ENCODE measurements at regions of chr1 and their contacts with region 1.

Region 1: GRCh38 chr1:179706339-179706941 is 36.7 kb upstream of the FAM163A start:
- DNase-seq: peak; percentile 32
- H3K4me3 ChIP-seq: no peak overlapping the region
- H3K27ac ChIP-seq: no peak overlapping the region
- H3K4me1 ChIP-seq: no peaks in the 10 kb centered on the region
- H3K27me3 ChIP-seq: no peaks in the 10 kb centered on the region
- CTCF ChIP-seq: peak; percentile 67 to 80

Region 2: GRCh38 chr1:180154325-180155181 is 448.1 kb after region 1 on chr1 and contains the start of gene QSOX1:
- CTCF ChIA-PET with region 1: no interaction called
- dilution Hi-C with region 1: no loop called
- in situ Hi-C with region 1: loop called in 1 of 2 experiments (anchors 25 kb)
- intact Hi-C with region 1: no loop called
- DNase-seq: peak; percentile 84
- H3K4me3 ChIP-seq: peak within 1 kb of the TSS; percentile 83 to 92 (median 83)
- H3K27ac ChIP-seq: peak within 1 kb of the TSS; percentile 50
- H3K4me1 ChIP-seq: peaks cover 34% of the 10 kb centered on the region
- H3K27me3 ChIP-seq: no peaks in the 10 kb centered on the region
- CTCF ChIP-seq: no peak
- total RNA-seq, gene QSOX1: 92.4 to 120 TPM

Region 3: GRCh38 chr1:180178511-180179161 is 472.2 kb after region 1 on chr1:
- CTCF ChIA-PET with region 1: no interaction called
- dilution Hi-C with region 1: no loop called
- in situ Hi-C with region 1: loop called (anchors 25 kb)
- intact Hi-C with region 1: loop called (anchors 1 kb)
- DNase-seq: no peak
- H3K4me3 ChIP-seq: no peak overlapping the region
- H3K27ac ChIP-seq: no peak overlapping the region
- H3K4me1 ChIP-seq: no peaks in the 10 kb centered on the region
- H3K27me3 ChIP-seq: no peaks in the 10 kb centered on the region
- CTCF ChIP-seq: peak; percentile 98

Region 4: DNA sequence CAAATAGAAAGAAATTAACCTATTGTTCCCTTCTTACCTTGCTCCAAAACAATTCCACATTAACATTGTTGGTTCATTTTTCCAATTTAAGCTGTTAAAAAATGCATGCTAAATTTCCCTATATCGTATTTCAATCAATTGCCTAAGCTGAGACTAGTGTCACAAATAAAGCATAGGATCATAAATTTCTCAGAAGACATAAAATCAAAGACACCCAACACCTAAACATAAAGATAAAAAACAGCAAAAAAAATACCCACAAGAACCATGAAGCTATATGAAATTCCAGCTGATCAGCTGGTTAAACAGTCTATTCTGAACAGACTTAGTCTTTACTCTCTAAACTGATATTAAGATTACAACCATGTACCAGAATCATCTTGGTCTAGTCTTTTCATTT is 763.6 kb after region 1 on chr1:
- CTCF ChIA-PET with region 1: no interaction called
- dilution Hi-C with region 1: no loop called
- in situ Hi-C with region 1: no loop called
- intact Hi-C with region 1: loop called (anchors 10 kb)
- DNase-seq: no peak
- H3K4me3 ChIP-seq: no peak overlapping the region
- H3K27ac ChIP-seq: no peak overlapping the region
- H3K4me1 ChIP-seq: no peaks in the 10 kb centered on the region
- H3K27me3 ChIP-seq: no peaks in the 10 kb centered on the region
- CTCF ChIP-seq: no peak

Measured in mammary epithelial cell (primary cell).